Cardiac septum (tissue), 1 donor: ENCODE measurements at regions of chr16 and their contacts with region 1.

Region 1: GRCh38 chr16:74991593-74992403 is 6.9 kb upstream of the WDR59 start:
- DNase-seq: no peak

Region 2: DNA sequence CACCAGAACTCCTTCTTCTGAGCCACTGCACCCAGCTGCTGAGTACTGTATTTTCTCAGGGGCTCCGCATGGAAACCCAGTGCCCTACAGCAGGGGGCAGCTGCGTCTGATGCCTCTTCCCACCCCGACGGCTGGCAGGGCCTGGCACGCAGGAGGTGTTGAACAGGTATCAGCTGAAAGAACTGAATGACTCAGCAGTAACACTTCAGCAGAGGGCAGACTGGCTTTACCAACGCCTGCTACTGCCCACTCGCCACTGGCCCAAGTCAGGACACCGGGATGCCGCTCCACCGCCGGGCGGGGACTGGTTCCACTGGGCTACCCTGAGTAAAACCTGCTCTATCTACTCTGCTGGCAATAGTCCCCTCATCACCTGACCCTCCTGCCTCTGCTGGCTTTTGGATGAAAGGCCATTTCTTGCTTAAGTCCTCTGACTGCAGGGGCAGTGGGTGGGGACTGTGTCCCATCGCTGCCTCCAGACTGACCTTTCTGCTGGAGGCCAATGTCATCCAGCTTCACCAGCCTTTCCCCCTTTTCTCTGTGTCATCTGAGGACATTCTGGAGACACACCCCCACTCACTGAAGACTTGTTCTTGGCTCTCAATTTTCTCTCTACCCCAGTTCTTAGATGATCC is 116.8 kb before region 1 on chr16:
- intact Hi-C with region 1: loop called (anchors 5 kb)
- DNase-seq: no peak

Region 3: DNA sequence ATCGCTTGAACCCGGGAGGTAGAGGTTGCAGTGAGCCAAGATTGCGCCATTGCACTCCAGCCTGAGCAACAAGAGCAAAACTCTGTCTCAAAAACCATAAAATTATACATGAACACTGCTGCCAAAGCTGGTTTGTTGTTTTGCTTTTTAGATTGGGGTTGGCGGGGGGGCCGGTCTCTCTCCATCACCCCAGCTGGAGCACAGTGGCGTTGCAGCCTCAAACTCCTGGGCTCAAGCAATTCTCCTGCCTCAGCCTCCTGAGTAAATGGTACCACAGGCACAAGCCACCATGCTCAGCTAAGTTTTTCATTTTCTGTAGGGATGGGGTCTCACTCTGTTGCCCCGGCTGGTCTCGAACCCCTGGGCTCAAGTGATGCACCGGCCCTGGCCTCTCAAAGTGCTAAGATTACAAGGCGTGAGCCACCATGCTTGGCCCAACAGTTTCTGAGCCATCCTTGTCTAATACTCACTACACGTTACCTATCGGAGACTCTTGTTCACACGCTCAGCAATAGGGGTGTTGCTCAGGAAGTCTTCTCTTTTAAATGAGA is 18.6 kb before region 1 on chr16:
- intact Hi-C with region 1: no loop called
- DNase-seq: no peak